ENCODE measurements at regions of chr12 and their contacts with region 1.

Region 1: DNA sequence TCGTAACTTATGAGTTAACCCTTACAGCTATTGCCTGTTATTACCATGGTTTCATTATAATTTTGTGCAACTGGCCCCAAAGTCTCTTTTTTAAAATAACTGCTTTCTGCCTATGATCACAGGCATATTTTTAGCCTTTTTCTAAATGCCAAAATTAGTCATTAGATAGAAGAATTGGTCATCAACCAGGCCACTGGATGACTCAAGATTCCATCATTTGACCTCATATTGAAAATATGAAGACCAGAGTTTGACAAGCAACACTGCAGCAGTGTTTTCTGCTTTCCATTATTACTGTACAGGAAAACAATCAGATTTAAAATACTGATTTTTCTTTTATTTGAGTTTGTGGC is 54.7 kb upstream of the OTOGL start:
- DNase-seq: no peak
- H3K4me3 Mint-ChIP-seq: no peak overlapping the region
- H3K27ac Mint-ChIP-seq: no peak overlapping the region
- H3K4me1 Mint-ChIP-seq: peaks cover 3% of the 10 kb centered on the region
- H3K27me3 Mint-ChIP-seq: peaks cover 17% of the 10 kb centered on the region

Region 2: DNA sequence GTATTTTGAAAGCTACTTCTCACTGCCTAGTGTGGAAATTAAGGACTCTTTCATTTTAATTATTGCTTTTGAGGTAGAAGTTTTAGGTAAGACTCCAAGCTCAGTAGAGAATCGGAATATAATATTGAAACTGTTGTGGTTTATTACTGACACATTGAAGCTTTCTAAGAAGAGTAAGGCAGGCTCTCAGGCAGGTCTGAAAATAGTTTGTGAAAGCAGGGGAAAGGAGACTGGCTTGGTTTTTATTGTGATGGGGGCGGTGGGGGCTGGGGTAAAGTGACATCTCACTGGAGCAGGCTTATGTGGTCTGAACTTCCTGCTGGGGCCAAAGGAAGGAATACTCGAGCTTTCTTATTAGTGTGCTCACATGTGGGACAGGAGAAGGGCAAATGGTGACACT is 134.2 kb after region 1 on chr12:
- intact Hi-C with region 1: loop called (anchors 2 kb)
- DNase-seq: no peak
- H3K4me3 Mint-ChIP-seq: peak overlapping the region; percentile 18
- H3K27ac Mint-ChIP-seq: peak overlapping the region; percentile 44
- H3K4me1 Mint-ChIP-seq: peaks cover 25% of the 10 kb centered on the region
- H3K27me3 Mint-ChIP-seq: no peaks in the 10 kb centered on the region

Region 3: GRCh38 chr12:80230068-80230467 is 185.4 kb after region 1 on chr12:
- intact Hi-C with region 1: no loop called
- DNase-seq: no peak
- H3K4me3 Mint-ChIP-seq: no peak overlapping the region
- H3K27ac Mint-ChIP-seq: no peak overlapping the region
- H3K4me1 Mint-ChIP-seq: no peaks in the 10 kb centered on the region
- H3K27me3 Mint-ChIP-seq: peaks cover 5% of the 10 kb centered on the region